Endothelial cell of umbilical vein (primary cell): ENCODE measurements at regions of chr1 and their contacts with region 1.

Region 1: DNA sequence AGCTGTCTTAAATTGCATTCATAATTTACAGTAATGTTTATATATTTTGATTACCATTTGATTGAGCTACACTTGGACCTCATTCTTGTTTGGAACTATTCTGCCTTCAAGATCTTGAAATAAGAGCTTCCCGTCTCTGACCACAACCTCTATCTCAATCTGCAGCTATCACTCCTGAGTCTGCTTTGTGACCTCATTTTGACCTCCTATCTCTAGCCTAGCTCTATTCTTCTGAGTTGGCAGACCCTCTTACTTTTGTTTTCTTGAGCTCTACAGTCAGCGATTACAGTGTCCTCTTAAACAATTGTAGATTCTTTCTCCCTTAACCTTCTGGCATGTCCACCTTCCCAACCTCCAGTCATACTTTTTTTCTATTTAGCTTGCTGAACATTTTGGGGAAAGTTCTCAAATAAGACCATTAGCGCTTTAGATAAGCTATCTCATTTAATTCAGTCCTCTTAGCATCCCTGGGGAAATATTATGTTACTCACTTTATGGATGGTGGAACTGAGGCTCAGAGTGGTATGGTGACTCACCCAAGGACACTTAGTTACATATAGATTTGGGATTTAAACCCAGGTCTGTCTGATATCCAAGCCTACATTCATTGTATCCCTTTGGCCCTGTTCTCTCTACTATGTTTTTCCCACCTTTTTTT is 19.1 kb downstream of the RPAP2 start:
- DNase-seq: peak; percentile 96
- H3K4me3 ChIP-seq: no peak overlapping the region
- H3K27ac ChIP-seq: no peak overlapping the region
- H3K4me1 ChIP-seq: peaks cover 7% of the 10 kb centered on the region
- H3K27me3 ChIP-seq: no peaks in the 10 kb centered on the region
- CTCF ChIP-seq: no peak
- POLR2A ChIP-seq: no peak

Region 2: GRCh38 chr1:92484472-92485380 is 166.8 kb after region 1 on chr1:
- CTCF ChIA-PET with region 1: interaction called, 5 read pairs
- POLR2A ChIA-PET with region 1: no interaction called
- dilution Hi-C with region 1: no loop called
- intact Hi-C with region 1: loop called (anchors 5 kb)
- DNase-seq: peak; percentile 23
- H3K4me3 ChIP-seq: peak overlapping the region in 1 of 3 experiments; percentile 26
- H3K27ac ChIP-seq: no peak overlapping the region
- H3K4me1 ChIP-seq: peaks cover 55% of the 10 kb centered on the region
- H3K27me3 ChIP-seq: peaks cover 66 to 94% of the 10 kb centered on the region in 2 experiments
- CTCF ChIP-seq: no peak
- POLR2A ChIP-seq: no peak

Region 3: GRCh38 chr1:92536980-92537884 is 219.3 kb after region 1 on chr1:
- CTCF ChIA-PET with region 1: no interaction called
- POLR2A ChIA-PET with region 1: no interaction called
- dilution Hi-C with region 1: no loop called
- intact Hi-C with region 1: no loop called
- DNase-seq: peak; percentile 64
- H3K4me3 ChIP-seq: no peak overlapping the region
- H3K27ac ChIP-seq: no peak overlapping the region
- H3K4me1 ChIP-seq: peaks cover 31% of the 10 kb centered on the region
- H3K27me3 ChIP-seq: no peaks in the 10 kb centered on the region
- CTCF ChIP-seq: no peak
- POLR2A ChIP-seq: no peak